HEK293 (cell line): ENCODE measurements at regions of chr6 and their contacts with region 1.

Region 1: DNA sequence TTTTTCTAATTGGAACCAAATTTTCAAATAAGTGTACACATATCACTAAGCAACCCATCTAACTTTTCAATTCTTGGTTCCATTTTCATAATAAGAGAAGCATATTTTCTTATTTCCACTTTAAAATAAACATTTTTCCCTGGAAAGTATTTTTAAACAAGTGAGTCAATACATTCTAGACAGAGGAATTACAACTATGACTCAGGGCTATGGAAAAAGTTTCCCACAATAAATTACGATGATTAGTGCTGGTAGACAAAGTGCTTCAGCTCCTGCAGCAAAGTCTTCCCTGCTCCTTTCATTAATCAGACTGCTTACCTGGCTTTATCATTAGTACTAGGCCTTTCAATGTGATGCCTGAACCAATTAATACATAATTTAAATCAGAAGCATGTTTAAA is 322.5 kb downstream of the HACE1 start:
- H3K4me3 ChIP-seq: no peak overlapping the region
- H3K27ac ChIP-seq: no peak overlapping the region
- H3K4me1 ChIP-seq: no peaks in the 10 kb centered on the region
- CTCF ChIP-seq: no peak

Region 2: GRCh38 chr6:104525677-104526312 is 11.4 kb before region 1 on chr6:
- CTCF ChIA-PET with region 1: interaction called, 53 read pairs
- POLR2A ChIA-PET with region 1: no interaction called
- H3K4me3 ChIP-seq: no peak overlapping the region
- H3K27ac ChIP-seq: no peak overlapping the region
- H3K4me1 ChIP-seq: peaks cover 3% of the 10 kb centered on the region
- CTCF ChIP-seq: peak; percentile 73